Activated CD4-positive, alpha-beta memory T cell treated with anti-CD3 and anti-CD28 coated beads for 36 hours (primary cell): ENCODE measurements at regions of chr17 and their contacts with region 1.

Region 1: GRCh38 chr17:35764123-35764991 is 3.7 kb downstream of the C17orf50 start:
- DNase-seq: peak; percentile 91
- H3K4me3 Mint-ChIP-seq: peak overlapping the region; percentile 81
- H3K27ac Mint-ChIP-seq: peak overlapping the region; percentile 46
- H3K4me1 Mint-ChIP-seq: peaks cover 9% of the 10 kb centered on the region
- H3K27me3 Mint-ChIP-seq: no peaks in the 10 kb centered on the region

Region 2: GRCh38 chr17:35747540-35748017 is 16.8 kb before region 1 on chr17:
- CTCF ChIA-PET with region 1: interaction called, 42 read pairs
- POLR2A ChIA-PET with region 1: no interaction called
- intact Hi-C with region 1: no loop called
- DNase-seq: peak; percentile 86
- H3K4me3 Mint-ChIP-seq: no peak overlapping the region
- H3K27ac Mint-ChIP-seq: no peak overlapping the region
- H3K4me1 Mint-ChIP-seq: peaks cover 5% of the 10 kb centered on the region
- H3K27me3 Mint-ChIP-seq: peaks cover 38% of the 10 kb centered on the region

Region 3: DNA sequence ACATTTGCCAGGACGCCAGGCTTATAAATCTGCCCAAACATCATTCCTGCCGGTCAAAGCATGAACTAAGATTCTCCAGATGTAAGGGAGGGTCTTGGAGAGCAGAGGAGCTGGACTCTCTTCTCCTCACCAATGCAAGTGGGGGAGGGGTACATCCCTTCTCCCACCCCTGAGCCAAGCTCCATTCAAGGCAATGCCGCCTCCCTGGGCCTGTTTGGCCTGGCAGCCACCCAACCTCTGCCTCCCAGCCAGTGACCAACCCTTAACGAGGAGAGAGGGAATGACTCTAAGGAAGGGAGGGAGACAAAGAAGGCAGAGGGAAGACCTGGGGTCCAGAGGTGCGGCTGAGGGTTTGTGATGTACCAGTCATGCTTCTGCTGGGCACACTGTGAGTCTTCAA is 10.1 kb after region 1 on chr17:
- CTCF ChIA-PET with region 1: interaction called, 30 read pairs
- POLR2A ChIA-PET with region 1: no interaction called
- intact Hi-C with region 1: no loop called
- DNase-seq: no peak
- H3K4me3 Mint-ChIP-seq: no peak overlapping the region
- H3K27ac Mint-ChIP-seq: no peak overlapping the region
- H3K4me1 Mint-ChIP-seq: no peaks in the 10 kb centered on the region
- H3K27me3 Mint-ChIP-seq: peaks cover 16% of the 10 kb centered on the region

Region 4: GRCh38 chr17:35794988-35795824 is 30.8 kb after region 1 on chr17 and contains the start of gene MMP28:
- CTCF ChIA-PET with region 1: interaction called, 60 read pairs
- POLR2A ChIA-PET with region 1: interaction called, 3 read pairs
- intact Hi-C with region 1: no loop called
- DNase-seq: peak; percentile 53
- H3K4me3 Mint-ChIP-seq: peak within 1 kb of the TSS; percentile 60
- H3K27ac Mint-ChIP-seq: no peak within 1 kb of the TSS
- H3K4me1 Mint-ChIP-seq: peaks cover 14% of the 10 kb centered on the region
- H3K27me3 Mint-ChIP-seq: peaks cover 45% of the 10 kb centered on the region
- total RNA-seq, gene MMP28: not detected

Region 5: DNA sequence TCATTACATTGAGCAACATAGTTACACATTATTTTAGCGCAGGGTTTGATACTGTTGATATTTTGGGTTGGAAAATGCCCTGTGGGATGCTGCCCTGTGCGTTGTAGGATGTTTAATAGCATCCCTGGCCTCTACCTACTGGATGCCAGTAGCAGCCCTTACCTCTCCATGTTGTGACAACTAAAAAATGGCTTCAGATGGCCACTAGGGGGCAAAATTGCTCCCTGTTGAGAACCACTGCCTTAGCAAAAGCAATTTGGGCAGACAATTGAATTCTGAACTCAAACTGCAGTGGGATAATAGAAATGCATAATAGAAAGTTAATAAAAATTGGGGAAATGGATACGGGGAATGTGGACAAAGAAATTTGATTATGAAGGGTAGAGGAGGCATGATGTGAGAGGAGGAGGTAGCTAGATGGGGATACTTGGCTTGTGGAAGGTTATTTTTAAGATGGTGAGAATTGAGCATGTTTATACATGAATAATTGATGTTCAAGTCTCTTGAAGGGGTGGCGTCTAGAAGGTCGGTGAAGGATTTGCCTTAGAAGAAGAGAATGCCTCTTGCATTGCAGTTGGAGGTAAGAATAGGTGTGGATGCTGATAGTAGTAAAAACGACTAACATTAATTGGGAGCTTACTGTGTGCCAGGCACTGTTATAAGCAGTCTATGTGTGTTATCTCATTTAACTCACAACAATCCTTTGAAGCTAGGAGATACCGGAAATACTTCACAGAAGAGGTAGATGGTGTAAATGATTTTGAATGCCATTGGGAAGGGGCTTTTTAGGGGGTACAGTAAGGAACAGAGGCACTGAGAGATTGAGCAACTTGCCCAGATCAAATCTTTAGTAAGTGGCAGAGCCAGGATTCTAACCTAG is 85.4 kb after region 1 on chr17:
- CTCF ChIA-PET with region 1: interaction called, 16 read pairs
- POLR2A ChIA-PET with region 1: no interaction called
- intact Hi-C with region 1: no loop called
- DNase-seq: peak; percentile 62
- H3K4me3 Mint-ChIP-seq: no peak overlapping the region
- H3K27ac Mint-ChIP-seq: no peak overlapping the region
- H3K4me1 Mint-ChIP-seq: peaks cover 13% of the 10 kb centered on the region
- H3K27me3 Mint-ChIP-seq: no peaks in the 10 kb centered on the region